K562 (cell line): ENCODE measurements at regions of chr15 and their contacts with region 1.

Region 1: GRCh38 chr15:85296615-85297402 is 83.6 kb upstream of the AKAP13 start:
- DNase-seq: peak in 3 of 4 experiments; percentile 17 to 57 (median 46)
- ATAC-seq: peak; percentile 96
- H3K4me3 ChIP-seq: no peak overlapping the region
- H3K27ac ChIP-seq: no peak overlapping the region
- H3K4me1 ChIP-seq: no peaks in the 10 kb centered on the region
- H3K27me3 ChIP-seq: peaks cover 2 to 10% of the 10 kb centered on the region in 2 experiments; a peak in 3 of 5 replicates
- CTCF ChIP-seq: peak; percentile 62 to 66 (median 62)
- EP300 ChIP-seq: no peak
- POLR2A ChIP-seq: no peak
- RAD21 ChIP-seq: peak; percentile 33 to 64

Region 2: DNA sequence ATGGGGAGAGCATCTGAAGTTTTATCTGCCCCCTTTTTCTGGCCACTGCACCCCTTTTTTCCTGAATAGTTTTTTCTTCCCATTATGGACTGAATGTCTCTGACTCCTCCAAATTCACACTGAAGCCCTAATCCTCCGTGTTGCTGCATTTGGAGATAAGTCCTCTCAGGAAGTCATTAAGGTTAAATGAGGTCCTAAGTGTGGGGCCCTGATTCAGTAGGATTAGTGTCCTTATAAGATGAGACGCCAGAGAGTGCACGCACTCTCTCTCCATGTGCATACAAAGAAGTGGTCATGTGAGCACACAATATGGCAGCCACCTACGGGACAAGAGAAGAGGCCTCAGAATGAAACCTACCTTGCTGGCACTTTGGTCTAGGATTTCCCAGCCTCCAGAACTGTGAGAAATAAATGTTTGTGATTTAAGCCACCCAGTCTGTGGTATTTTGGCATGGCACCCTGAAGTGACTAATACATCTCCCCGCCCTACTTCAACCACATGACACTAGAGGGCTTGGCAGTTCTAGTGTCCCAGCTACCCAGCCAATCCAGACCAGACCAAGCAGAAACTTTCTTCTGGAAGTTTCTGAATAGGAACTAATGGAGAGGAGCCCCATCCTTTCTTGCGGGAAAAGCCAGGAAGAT is 123.8 kb before region 1 on chr15:
- CTCF ChIA-PET with region 1: no interaction called
- POLR2A ChIA-PET with region 1: no interaction called
- in situ Hi-C with region 1: loop called (anchors 10 kb)
- intact Hi-C with region 1: no loop called
- DNase-seq: peak in 1 of 4 experiments; percentile 50
- ATAC-seq: peak; percentile 53; the same call in 2 of the 3 replicates
- H3K4me3 ChIP-seq: no peak overlapping the region
- H3K27ac ChIP-seq: no peak overlapping the region
- H3K4me1 ChIP-seq: 0 out of 5 replicates have a peak, but pooled peaks cover 0 to 3% of the 10 kb centered on the region in 2 experiments
- H3K27me3 ChIP-seq: no peaks in the 10 kb centered on the region
- CTCF ChIP-seq: no peak
- EP300 ChIP-seq: no peak; the same call in 1 of the 2 replicates
- POLR2A ChIP-seq: no peak
- RAD21 ChIP-seq: no peak

Region 3: GRCh38 chr15:85374831-85375230 is 78.0 kb after region 1 on chr15:
- CTCF ChIA-PET with region 1: no interaction called
- POLR2A ChIA-PET with region 1: no interaction called
- in situ Hi-C with region 1: no loop called
- intact Hi-C with region 1: no loop called
- DNase-seq: no peak
- ATAC-seq: no peak
- H3K4me3 ChIP-seq: no peak overlapping the region
- H3K27ac ChIP-seq: no peak overlapping the region
- H3K4me1 ChIP-seq: no peaks in the 10 kb centered on the region
- H3K27me3 ChIP-seq: peaks cover 5 to 6% of the 10 kb centered on the region in 2 experiments; a peak in 4 of 5 replicates
- CTCF ChIP-seq: no peak
- EP300 ChIP-seq: no peak
- POLR2A ChIP-seq: no peak
- RAD21 ChIP-seq: no peak

Region 4: DNA sequence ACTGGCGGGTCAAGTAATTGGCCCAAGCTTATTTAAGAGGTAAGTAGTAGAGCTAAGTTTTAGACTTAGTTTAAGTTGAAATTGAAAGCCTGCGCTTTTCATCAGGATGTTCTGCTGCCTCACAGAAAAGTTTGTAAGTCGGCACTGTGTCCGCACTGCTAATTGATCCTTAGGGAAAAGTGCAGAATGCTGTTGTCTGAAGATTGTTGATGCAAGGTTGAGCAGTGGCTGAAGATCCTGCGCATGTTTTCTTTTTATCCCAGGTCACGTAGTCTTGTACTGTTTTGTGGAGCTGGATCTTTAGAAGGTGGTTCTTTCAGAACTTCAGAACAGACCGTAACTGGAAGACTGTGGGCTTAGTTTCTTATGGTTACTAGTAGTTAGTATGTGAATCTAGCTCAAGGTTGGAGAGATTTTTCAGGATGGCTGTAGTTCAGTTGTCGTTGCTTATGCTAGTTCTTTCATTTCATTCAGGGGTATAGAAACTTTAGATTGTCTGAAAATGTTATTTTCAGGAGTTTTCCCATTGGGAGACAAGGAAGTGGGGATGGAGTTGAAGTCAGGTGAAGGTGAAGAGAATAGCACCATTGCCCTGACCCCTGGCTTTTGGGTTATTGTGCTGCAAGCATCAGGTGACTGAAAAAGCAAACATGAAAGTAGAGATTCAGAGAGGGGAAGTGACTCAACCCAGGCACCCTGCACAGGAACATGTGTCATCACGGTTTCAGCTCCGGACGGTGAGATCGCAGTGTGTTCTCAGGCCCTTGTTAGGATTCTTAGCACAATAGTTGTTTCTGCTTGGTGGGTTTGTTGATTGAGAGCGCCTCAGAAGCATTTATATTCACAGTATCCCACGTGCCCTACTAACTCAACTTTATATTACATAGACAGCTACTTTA is 116.4 kb after region 1 on chr15:
- CTCF ChIA-PET with region 1: no interaction called
- POLR2A ChIA-PET with region 1: no interaction called
- in situ Hi-C with region 1: no loop called
- intact Hi-C with region 1: loop called (anchors 10 kb)
- DNase-seq: no peak
- ATAC-seq: no peak
- H3K4me3 ChIP-seq: no peak overlapping the region
- H3K27ac ChIP-seq: no peak overlapping the region
- H3K4me1 ChIP-seq: no peaks in the 10 kb centered on the region
- H3K27me3 ChIP-seq: peaks cover 6 to 9% of the 10 kb centered on the region in 2 experiments; a peak in 4 of 5 replicates
- CTCF ChIP-seq: no peak
- EP300 ChIP-seq: no peak
- POLR2A ChIP-seq: no peak
- RAD21 ChIP-seq: no peak

Region 5: GRCh38 chr15:85504749-85505676 is 208.2 kb after region 1 on chr15:
- CTCF ChIA-PET with region 1: interaction called, 4 read pairs
- POLR2A ChIA-PET with region 1: no interaction called
- in situ Hi-C with region 1: no loop called
- intact Hi-C with region 1: loop called (anchors 1 kb)
- DNase-seq: peak; percentile 12 to 56 (median 18)
- ATAC-seq: peak; percentile 66; the same call in 2 of the 3 replicates
- H3K4me3 ChIP-seq: no peak overlapping the region
- H3K27ac ChIP-seq: no peak overlapping the region
- H3K4me1 ChIP-seq: no peaks in the 10 kb centered on the region
- H3K27me3 ChIP-seq: no peaks in the 10 kb centered on the region
- CTCF ChIP-seq: peak in 2 of 3 experiments; percentile 35 to 62; a peak in 4 of 6 replicates
- EP300 ChIP-seq: no peak
- POLR2A ChIP-seq: no peak
- RAD21 ChIP-seq: peak; percentile 39 to 67

Region 6: DNA sequence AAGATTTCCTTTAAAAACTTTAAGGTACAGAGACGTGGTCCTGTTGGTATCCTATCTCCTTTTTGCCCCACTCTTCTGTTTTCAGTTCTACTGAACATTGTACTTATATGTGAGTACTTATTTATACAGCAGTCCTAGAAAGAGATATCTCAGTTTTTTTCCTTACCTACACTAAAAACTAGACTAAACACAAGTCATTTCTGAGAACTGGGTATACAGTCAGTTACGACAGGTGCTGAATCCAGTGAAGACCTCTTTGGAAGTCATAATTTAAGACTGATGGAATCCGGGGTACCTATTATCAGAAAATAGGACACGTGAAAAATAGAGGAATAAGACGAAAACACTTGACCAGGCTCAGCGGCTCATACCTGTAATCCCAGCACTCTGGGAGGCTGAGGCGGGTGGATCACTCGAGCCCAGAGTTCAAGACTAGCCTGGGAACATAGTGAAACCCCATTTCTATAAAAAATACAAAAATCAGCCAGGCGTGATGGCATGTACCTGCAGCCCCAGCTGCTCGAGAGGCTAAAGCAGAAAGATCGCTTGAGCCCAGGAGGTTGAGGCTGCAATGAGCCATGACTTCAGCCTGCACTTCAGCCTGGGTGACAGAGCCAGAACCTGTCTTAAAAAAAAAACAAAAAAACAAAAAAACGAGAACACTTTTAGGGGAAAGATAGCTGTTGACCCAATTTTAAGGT is 421.6 kb after region 1 on chr15:
- CTCF ChIA-PET with region 1: no interaction called
- POLR2A ChIA-PET with region 1: no interaction called
- in situ Hi-C with region 1: no loop called
- intact Hi-C with region 1: no loop called
- DNase-seq: no peak
- ATAC-seq: no peak
- H3K4me3 ChIP-seq: no peak overlapping the region
- H3K27ac ChIP-seq: no peak overlapping the region
- H3K4me1 ChIP-seq: no peaks in the 10 kb centered on the region
- H3K27me3 ChIP-seq: no peaks in the 10 kb centered on the region
- CTCF ChIP-seq: no peak
- EP300 ChIP-seq: no peak
- POLR2A ChIP-seq: no peak
- RAD21 ChIP-seq: no peak